Heart right ventricle (tissue), 16 donors: ENCODE measurements at regions of chr22 and their contacts with region 1.

Region 1: GRCh38 chr22:25930710-25931364 is 188.8 kb downstream of the MYO18B start:
- DNase-seq: no peak
- ATAC-seq: peak in 1 of 8 donors; percentile 25
- H3K4me3 ChIP-seq: no peak overlapping the region
- H3K27ac ChIP-seq: no peak overlapping the region
- H3K4me1 ChIP-seq: peaks cover 0 to 5% (median 0%) of the 10 kb centered on the region in 9 donors
- H3K27me3 ChIP-seq: peaks cover 0 to 6% (median 0%) of the 10 kb centered on the region in 7 donors
- CTCF ChIP-seq: no peak

Region 2: DNA sequence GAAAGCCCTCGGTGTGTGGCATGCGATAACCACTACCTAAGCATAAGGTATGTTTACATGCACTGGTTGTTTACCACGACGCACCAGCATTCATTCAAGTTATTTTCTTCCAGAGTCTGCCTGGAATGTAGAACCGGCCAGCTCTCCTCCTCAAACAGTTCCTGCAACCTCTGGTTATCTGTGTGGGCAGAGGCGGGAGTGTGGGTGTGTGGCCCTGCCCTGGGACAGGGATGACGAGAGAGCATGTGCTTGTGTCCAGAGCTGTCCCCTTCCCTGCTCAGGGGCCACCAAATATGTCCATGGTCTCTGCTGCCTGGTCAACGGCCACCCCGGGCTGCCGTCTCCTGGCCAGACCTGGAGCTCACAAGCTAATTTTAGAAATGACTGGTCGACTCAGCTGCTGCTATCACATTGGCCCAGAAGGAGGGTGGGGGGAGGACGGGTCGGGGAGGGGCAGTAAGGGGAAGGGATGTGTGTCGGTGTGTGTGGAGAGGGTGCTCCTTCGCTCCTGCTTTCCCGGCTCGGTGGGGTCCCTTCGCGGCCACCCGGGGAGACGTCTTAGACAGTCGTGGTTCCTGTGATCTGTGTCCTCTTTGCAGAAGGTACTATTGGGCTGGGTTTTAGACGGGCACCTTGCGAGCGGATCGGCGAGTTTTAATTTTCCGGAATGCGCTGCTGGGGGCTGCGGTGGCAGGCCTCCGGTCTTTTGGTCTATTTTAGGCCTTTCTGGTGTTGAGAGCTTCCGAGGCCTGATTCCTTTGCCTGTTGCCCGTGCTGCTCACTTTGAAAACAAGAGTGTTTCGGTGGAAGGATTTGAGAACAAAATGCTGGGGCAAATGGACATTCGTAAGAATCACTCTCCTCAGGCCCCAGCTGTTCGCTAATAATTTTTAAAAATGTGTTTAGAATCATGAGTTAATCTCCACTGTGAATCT is 188.9 kb before region 1 on chr22 and contains the start of gene MYO18B:
- intact Hi-C with region 1: no loop called
- DNase-seq: peak; percentile 70 to 84
- ATAC-seq: peak; percentile 90 to 96 (median 94)
- H3K4me3 ChIP-seq: peak within 1 kb of the TSS; percentile 9 to 63 (median 51)
- H3K27ac ChIP-seq: peak within 1 kb of the TSS; percentile 75 to 96 (median 89)
- H3K4me1 ChIP-seq: peaks cover 0 to 26% (median 5%) of the 10 kb centered on the region in 9 donors
- H3K27me3 ChIP-seq: peaks cover 0 to 3% (median 0%) of the 10 kb centered on the region in 7 donors
- CTCF ChIP-seq: no peak
- total RNA-seq, gene MYO18B: 124 to 407 (median 234) TPM

Region 3: GRCh38 chr22:25878933-25879332 is 51.9 kb before region 1 on chr22:
- intact Hi-C with region 1: loop called in 1 of 10 experiments (anchors 10 kb)
- DNase-seq: no peak
- ATAC-seq: no peak
- H3K4me3 ChIP-seq: no peak overlapping the region
- H3K27ac ChIP-seq: no peak overlapping the region
- H3K4me1 ChIP-seq: peaks cover 0 to 2% (median 0%) of the 10 kb centered on the region in 9 donors
- H3K27me3 ChIP-seq: peaks cover 0 to 3% (median 0%) of the 10 kb centered on the region in 7 donors
- CTCF ChIP-seq: no peak